ENCODE measurements at regions of chr19 and their contacts with region 1.

Region 1: DNA sequence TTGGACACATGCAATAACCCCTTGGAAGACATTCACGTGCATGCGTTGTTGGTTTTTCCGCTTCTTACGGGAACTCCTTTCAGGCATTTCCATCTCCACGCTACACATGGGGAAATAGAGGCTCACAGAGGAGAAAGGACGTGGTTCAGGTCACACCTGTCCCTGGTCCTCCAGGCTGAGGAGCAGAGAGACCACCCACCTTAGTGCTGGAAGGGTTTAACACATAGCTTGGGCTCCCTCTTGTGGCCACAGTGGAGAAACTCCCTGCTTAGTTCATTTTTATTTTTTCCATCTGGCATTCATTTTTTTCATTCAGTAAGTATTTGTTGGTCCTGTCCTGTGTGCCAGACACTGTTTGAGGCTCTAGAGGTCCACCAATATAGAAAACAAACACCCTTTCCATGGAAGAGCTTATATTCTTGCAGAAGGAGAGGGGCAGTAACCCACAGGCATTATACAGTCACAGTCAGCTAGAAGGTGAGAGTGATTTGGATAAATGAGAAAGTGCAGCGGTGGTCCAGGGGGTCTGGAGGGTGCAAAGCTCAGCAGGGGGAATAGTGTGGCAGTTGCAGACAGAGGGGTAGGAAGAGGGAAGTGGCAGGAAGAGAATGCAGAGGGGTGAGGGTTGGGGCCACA is 24.2 kb upstream of the TTYH1 start:
- DNase-seq: peak; percentile 60
- H3K4me3 Mint-ChIP-seq: no peak overlapping the region
- H3K27ac Mint-ChIP-seq: no peak overlapping the region
- H3K4me1 Mint-ChIP-seq: peaks cover 32% of the 10 kb centered on the region
- H3K27me3 Mint-ChIP-seq: peaks cover 15% of the 10 kb centered on the region

Region 2: GRCh38 chr19:54266133-54266532 is 124.9 kb before region 1 on chr19:
- CTCF ChIA-PET with region 1: interaction called, 27 read pairs
- POLR2A ChIA-PET with region 1: no interaction called
- intact Hi-C with region 1: no loop called
- DNase-seq: peak; percentile 84
- H3K4me3 Mint-ChIP-seq: no peak overlapping the region
- H3K27ac Mint-ChIP-seq: no peak overlapping the region
- H3K4me1 Mint-ChIP-seq: no peaks in the 10 kb centered on the region
- H3K27me3 Mint-ChIP-seq: peaks cover 29% of the 10 kb centered on the region

Region 3: GRCh38 chr19:54325194-54325621 is 65.9 kb before region 1 on chr19:
- CTCF ChIA-PET with region 1: interaction called, 145 read pairs
- POLR2A ChIA-PET with region 1: no interaction called
- intact Hi-C with region 1: loop called (anchors 1 kb)
- DNase-seq: peak; percentile 38
- H3K4me3 Mint-ChIP-seq: no peak overlapping the region
- H3K27ac Mint-ChIP-seq: no peak overlapping the region
- H3K4me1 Mint-ChIP-seq: peaks cover 14% of the 10 kb centered on the region
- H3K27me3 Mint-ChIP-seq: peaks cover 12% of the 10 kb centered on the region

Region 4: GRCh38 chr19:54357381-54357780 is 33.7 kb before region 1 on chr19:
- CTCF ChIA-PET with region 1: interaction called, 29 read pairs
- POLR2A ChIA-PET with region 1: no interaction called
- intact Hi-C with region 1: loop called (anchors 5 kb)
- DNase-seq: no peak
- H3K4me3 Mint-ChIP-seq: no peak overlapping the region
- H3K27ac Mint-ChIP-seq: no peak overlapping the region
- H3K4me1 Mint-ChIP-seq: peaks cover 21% of the 10 kb centered on the region
- H3K27me3 Mint-ChIP-seq: no peaks in the 10 kb centered on the region

Region 5: DNA sequence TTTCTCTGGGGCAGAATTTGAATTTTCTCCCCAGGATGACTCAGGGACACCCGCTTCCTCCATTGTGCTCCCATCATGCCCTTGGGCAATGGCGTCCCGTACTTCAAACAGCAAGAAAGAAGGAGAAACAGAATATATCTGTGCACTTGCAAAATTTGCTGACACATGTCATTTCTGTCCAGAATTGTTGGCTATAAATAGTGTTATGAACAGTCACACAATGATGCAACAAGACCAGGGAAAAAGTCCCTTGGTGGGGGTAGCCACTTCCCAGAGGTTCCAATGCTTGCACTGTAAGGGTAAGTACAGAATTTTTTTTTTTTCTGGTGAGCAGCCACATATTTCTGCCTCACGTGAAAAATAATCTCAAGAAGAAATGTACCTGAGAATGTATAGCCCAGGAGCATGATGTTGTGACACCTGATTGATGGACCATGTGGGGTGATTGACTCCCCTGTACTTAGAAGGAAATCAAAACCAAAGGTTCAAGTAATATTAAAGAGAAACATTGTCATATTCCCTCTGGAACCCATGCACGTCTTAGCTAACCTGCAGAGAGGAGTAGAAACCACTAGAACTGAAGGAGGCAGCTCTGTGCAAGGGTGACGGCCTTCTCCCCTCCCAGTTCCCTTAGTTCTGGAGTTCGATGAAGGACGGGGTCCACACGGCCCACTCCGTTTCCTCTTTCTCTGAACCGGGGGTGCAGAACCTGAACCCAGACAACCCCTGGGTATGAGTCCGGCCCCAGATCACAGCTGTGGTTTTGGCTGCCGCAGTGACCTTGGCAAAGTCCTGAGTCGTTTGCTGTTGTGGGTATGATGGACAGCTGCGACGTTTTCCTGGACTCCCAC is 17.1 kb before region 1 on chr19:
- CTCF ChIA-PET with region 1: interaction called, 16 read pairs
- POLR2A ChIA-PET with region 1: interaction called, 6 read pairs
- intact Hi-C with region 1: loop called (anchors 2 kb)
- DNase-seq: no peak
- H3K4me3 Mint-ChIP-seq: no peak overlapping the region
- H3K27ac Mint-ChIP-seq: no peak overlapping the region
- H3K4me1 Mint-ChIP-seq: peaks cover 73% of the 10 kb centered on the region
- H3K27me3 Mint-ChIP-seq: peaks cover 18% of the 10 kb centered on the region

Region 6: GRCh38 chr19:54418030-54418929 is 27.2 kb after region 1 on chr19:
- CTCF ChIA-PET with region 1: interaction called, 15 read pairs
- POLR2A ChIA-PET with region 1: no interaction called
- intact Hi-C with region 1: no loop called
- DNase-seq: peak; percentile 51
- H3K4me3 Mint-ChIP-seq: no peak overlapping the region
- H3K27ac Mint-ChIP-seq: peak overlapping the region; percentile 2
- H3K4me1 Mint-ChIP-seq: peaks cover 15% of the 10 kb centered on the region
- H3K27me3 Mint-ChIP-seq: peaks cover 43% of the 10 kb centered on the region

Region 7: DNA sequence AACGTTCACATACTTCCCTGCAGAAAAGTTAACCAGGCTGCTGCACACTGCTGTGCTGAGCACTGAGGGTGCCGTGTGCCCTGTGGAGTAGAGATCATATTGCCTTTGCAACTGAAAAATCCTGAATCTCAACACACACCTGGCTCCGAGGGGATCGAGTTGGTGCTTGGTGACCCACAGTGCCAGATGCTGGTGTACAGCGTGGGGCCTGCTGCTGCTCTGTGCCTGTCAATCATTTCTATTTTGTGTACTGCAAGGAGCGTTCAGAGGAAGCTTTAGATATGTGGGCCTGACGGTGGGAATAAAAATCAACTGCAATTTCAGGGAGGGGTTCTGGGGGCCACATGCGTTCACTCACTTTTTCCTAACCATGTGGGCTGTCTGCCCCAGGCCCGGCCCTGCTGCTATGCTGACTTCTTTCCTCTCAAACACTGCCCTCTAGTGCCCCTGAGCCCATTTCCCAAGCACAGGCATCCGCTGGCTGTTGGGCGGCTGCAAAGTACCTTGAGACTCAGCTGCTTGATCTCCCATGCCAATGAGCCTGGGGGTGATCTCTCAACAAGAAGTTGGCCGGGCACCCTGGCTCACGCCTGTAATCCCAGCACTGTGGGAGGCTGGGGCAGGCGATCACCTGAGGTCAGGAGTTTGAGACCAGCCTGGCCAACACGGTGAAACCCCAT is 48.3 kb after region 1 on chr19:
- CTCF ChIA-PET with region 1: no interaction called
- POLR2A ChIA-PET with region 1: no interaction called
- intact Hi-C with region 1: no loop called
- DNase-seq: peak; percentile 36
- H3K4me3 Mint-ChIP-seq: no peak overlapping the region
- H3K27ac Mint-ChIP-seq: no peak overlapping the region
- H3K4me1 Mint-ChIP-seq: peaks cover 11% of the 10 kb centered on the region
- H3K27me3 Mint-ChIP-seq: no peaks in the 10 kb centered on the region

Region 8: DNA sequence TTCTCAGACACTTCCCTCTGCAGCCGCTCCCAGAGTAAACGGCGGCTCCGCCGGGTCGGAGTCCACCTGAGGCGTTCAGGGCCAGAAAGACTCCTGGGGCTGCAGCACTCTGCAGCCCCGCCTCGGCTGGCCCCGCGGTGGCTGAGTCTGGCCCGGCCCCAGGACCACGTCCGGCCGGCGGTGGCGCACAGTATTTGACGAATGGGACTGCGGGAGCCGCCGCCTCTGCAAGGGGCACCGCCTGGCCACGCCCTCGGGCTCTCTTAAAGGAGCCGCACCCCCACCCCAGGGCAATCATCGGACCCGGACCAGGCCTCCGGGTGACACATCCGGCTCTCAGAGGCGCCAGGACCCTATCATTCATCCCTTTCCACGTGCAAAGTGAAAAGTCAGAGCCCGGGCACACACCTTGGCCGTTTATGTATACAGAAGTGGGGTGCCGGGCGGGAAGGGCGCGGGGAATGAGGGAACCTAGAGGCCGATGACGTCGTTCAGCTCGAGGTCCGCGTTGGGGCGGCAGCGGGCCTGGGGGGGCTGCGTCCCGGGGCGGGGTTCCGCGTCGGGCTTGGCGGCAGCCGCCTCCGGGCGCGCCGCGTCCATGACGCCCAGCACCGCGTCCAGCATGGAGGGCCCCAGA is 73.7 kb after region 1 on chr19:
- CTCF ChIA-PET with region 1: no interaction called
- POLR2A ChIA-PET with region 1: no interaction called
- intact Hi-C with region 1: no loop called
- DNase-seq: peak; percentile 91
- H3K4me3 Mint-ChIP-seq: peak overlapping the region; percentile 78
- H3K27ac Mint-ChIP-seq: peak overlapping the region; percentile 92
- H3K4me1 Mint-ChIP-seq: peaks cover 23% of the 10 kb centered on the region
- H3K27me3 Mint-ChIP-seq: peaks cover 6% of the 10 kb centered on the region

Region 9: DNA sequence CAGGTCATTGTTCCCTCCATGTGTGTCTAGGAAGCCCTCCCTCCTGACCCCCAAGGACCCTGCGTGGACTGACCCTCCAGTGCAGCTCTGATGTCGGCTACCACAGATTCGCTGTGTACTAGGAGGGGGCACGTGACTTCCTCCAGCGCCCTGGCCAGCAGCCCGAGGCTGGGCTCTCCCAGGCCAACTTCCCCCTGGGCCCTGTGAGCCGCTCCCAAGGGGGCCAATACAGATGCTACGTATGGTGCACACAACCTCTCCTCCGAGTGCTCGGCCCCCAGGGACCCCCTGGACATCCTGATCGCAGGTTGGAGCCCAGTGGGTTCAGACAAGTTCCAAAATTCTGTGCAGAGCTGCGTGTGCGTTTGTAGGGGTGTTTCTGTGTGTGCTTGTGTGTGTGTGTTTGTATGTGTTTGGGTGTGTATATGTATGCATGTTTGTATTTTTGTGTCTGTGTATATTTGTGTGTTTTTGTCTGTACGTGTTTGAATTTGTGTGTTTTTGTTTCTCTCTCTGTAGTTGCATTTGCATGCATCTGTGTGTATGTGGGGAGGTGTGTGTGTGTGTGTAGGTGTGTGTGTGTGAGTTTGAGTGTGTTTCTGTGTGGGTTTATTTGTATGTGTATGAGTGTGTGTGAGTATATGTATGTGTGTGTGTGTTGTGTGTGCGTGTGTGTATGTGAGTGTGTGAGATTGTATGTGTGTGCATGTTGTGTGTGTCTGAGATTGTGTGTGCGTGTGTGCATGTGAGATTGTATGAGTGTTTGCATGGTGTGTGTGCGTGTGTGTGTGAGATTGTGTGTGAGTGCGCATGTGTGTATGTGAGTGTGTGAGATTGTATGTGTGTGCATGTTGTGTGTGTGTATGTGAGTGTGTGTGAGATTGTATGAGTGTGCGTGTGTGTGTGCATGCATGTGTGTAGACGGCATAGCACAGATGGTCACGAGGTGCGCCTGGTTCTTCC is 161.2 kb after region 1 on chr19:
- CTCF ChIA-PET with region 1: no interaction called
- POLR2A ChIA-PET with region 1: no interaction called
- intact Hi-C with region 1: no loop called
- DNase-seq: no peak
- H3K4me3 Mint-ChIP-seq: no peak overlapping the region
- H3K27ac Mint-ChIP-seq: no peak overlapping the region
- H3K4me1 Mint-ChIP-seq: no peaks in the 10 kb centered on the region
- H3K27me3 Mint-ChIP-seq: peaks cover 17% of the 10 kb centered on the region

Measured in activated CD4-positive, alpha-beta memory T cell treated with anti-CD3 and anti-CD28 coated beads for 36 hours (primary cell).